ENCODE measurements at regions of chr2 and their contacts with region 1.

Region 1: DNA sequence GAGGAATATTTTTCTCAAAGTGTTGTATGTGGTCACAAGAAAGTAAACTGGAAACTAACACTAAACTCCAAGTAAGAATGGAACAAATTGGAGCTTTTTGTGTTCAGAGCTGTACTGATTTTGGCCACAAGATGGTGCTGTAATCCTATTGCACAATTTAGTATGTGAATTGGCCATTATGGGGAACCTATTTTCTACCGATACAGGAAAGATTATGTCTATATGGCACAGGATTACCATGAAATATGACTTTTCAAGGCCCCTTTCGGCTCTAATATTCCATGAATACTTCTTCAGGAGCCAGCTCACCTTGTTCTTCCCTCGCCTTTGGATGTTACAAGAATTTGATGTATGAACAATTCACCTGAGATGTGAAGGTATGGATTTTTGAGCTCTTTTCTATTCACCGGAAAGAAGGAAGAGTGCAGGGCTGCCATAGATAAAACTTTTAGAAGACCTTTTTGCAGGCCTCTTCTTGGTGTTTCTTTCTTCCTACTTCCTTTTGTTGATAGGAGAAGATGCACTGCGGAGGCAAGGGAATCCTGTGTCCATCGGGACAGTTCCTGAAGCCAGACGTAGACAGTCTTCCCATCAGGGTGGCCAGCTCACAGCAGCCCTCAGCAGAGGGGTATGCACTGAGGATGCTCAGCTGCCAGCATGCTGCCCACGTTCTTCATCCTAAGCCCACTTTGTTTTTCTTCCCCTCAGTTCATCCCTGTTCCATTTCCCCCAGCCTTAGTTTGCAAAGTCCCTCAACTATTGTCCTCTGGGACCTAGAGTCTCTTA is 13.3 kb downstream of the MRPL44 start:
- DNase-seq: no peak
- H3K4me3 ChIP-seq: no peak overlapping the region
- CTCF ChIP-seq: peak; percentile 65

Region 2: GRCh38 chr2:223901854-223902253 is 68.7 kb before region 1 on chr2:
- CTCF ChIA-PET with region 1: no interaction called
- POLR2A ChIA-PET with region 1: no interaction called
- DNase-seq: no peak
- H3K4me3 ChIP-seq: no peak overlapping the region
- CTCF ChIP-seq: no peak

Region 3: GRCh38 chr2:223957092-223957851 is 13.3 kb before region 1 on chr2 and contains the start of gene MRPL44:
- CTCF ChIA-PET with region 1: interaction called, 40 read pairs
- POLR2A ChIA-PET with region 1: interaction called, 3 read pairs
- DNase-seq: peak; percentile 69
- H3K4me3 ChIP-seq: peak within 1 kb of the TSS; percentile 80
- CTCF ChIP-seq: no peak

Region 4: GRCh38 chr2:224278531-224278930 is 308.0 kb after region 1 on chr2:
- CTCF ChIA-PET with region 1: interaction called, 365 read pairs
- POLR2A ChIA-PET with region 1: no interaction called
- DNase-seq: peak; percentile 33
- H3K4me3 ChIP-seq: no peak overlapping the region
- CTCF ChIP-seq: peak; percentile 14

Region 5: GRCh38 chr2:224357098-224357901 is 386.8 kb after region 1 on chr2:
- CTCF ChIA-PET with region 1: interaction called, 10 read pairs
- POLR2A ChIA-PET with region 1: no interaction called
- DNase-seq: no peak
- H3K4me3 ChIP-seq: no peak overlapping the region
- CTCF ChIP-seq: peak; percentile 53

Region 6: GRCh38 chr2:224650815-224651439 is 680.4 kb after region 1 on chr2:
- CTCF ChIA-PET with region 1: interaction called, 13 read pairs
- POLR2A ChIA-PET with region 1: no interaction called
- DNase-seq: peak; percentile 10
- H3K4me3 ChIP-seq: no peak overlapping the region
- CTCF ChIP-seq: peak; percentile 69